Activated B cell treated with CpG ODN at 0.5 μM for 24 hours (primary cell): ENCODE measurements at regions of chrX and their contacts with region 1.

Region 1: DNA sequence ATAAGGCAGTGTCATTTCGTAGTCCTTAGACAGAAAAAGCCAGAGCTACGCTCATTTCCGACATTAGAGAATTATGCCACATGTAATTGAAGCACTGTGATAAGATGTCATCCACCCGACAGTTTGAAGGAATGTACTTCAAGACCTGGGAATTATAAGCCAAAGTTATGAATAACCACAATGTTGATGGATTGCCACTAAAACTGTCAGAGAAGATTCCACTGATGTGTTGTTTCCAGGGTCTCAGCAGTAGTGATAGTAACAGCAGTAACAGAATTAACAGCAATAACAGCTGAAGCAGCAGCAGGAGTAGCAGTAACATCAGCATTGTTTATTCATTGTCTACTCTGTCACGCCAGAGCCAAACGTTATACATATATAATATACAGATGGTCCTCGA is 24.7 kb downstream of the RAB33A start:
- DNase-seq: no peak
- ATAC-seq: no peak
- H3K4me3 Mint-ChIP-seq: no peak overlapping the region
- H3K27ac Mint-ChIP-seq: no peak overlapping the region
- H3K4me1 Mint-ChIP-seq: peaks cover 7% of the 10 kb centered on the region
- H3K27me3 Mint-ChIP-seq: no peaks in the 10 kb centered on the region
- CTCF ChIP-seq: no peak

Region 2: GRCh38 chrX:129606918-129607317 is 589.5 kb before region 1 on chrX:
- CTCF ChIA-PET with region 1: no interaction called
- POLR2A ChIA-PET with region 1: no interaction called
- intact Hi-C with region 1: loop called (anchors 1 kb)
- DNase-seq: no peak
- ATAC-seq: peak; percentile 61
- H3K4me3 Mint-ChIP-seq: no peak overlapping the region
- H3K27ac Mint-ChIP-seq: no peak overlapping the region
- H3K4me1 Mint-ChIP-seq: peaks cover 19% of the 10 kb centered on the region
- H3K27me3 Mint-ChIP-seq: no peaks in the 10 kb centered on the region
- CTCF ChIP-seq: no peak

Region 3: GRCh38 chrX:129925305-129926092 is 271.0 kb before region 1 on chrX:
- CTCF ChIA-PET with region 1: interaction called, 7 read pairs
- POLR2A ChIA-PET with region 1: no interaction called
- intact Hi-C with region 1: loop called (anchors 10 kb)
- DNase-seq: peak; percentile 30
- ATAC-seq: peak; percentile 84
- H3K4me3 Mint-ChIP-seq: no peak overlapping the region
- H3K27ac Mint-ChIP-seq: no peak overlapping the region
- H3K4me1 Mint-ChIP-seq: peaks cover 4% of the 10 kb centered on the region
- H3K27me3 Mint-ChIP-seq: no peaks in the 10 kb centered on the region
- CTCF ChIP-seq: no peak

Region 4: DNA sequence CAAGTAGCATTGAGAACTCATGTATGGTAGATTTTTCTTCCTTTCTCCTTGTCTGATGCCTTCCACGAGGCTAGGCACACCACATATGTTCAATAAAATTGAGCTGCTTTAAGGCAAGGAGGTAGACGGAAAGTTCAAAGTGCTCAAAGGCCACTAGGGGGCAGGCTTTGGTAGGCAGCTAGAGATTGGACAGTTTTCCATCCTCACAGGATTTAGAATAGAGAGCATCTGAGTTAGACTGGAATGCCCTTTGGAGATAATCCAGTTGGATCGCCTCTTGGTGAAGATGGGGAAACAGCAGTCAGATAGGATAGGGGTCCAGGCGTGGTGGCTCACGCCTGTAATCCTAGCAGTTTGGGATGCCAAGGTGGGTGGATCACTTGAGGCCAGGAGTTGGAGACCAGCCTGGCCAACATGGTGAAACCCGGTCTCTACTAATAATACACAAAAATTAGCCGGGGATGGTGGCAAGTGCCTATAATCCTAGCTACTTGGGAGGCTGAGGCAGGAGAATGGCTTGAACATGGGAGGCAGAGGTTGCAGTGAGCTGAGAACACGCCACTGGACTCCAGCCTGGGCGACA is 116.6 kb before region 1 on chrX:
- CTCF ChIA-PET with region 1: interaction called, 80 read pairs
- POLR2A ChIA-PET with region 1: no interaction called
- intact Hi-C with region 1: loop called (anchors 1 kb)
- DNase-seq: no peak
- ATAC-seq: no peak
- H3K4me3 Mint-ChIP-seq: no peak overlapping the region
- H3K27ac Mint-ChIP-seq: peak overlapping the region; percentile 61
- H3K4me1 Mint-ChIP-seq: peaks cover 41% of the 10 kb centered on the region
- H3K27me3 Mint-ChIP-seq: no peaks in the 10 kb centered on the region
- CTCF ChIP-seq: no peak

Region 5: GRCh38 chrX:130110379-130111219 is 85.9 kb before region 1 on chrX and contains the start of gene ELF4:
- CTCF ChIA-PET with region 1: no interaction called
- POLR2A ChIA-PET with region 1: no interaction called
- intact Hi-C with region 1: no loop called
- DNase-seq: peak; percentile 44
- ATAC-seq: peak; percentile 59
- H3K4me3 Mint-ChIP-seq: peak within 1 kb of the TSS; percentile 92
- H3K27ac Mint-ChIP-seq: peak within 1 kb of the TSS; percentile 88
- H3K4me1 Mint-ChIP-seq: peaks cover 40% of the 10 kb centered on the region
- H3K27me3 Mint-ChIP-seq: no peaks in the 10 kb centered on the region
- CTCF ChIP-seq: no peak
- total RNA-seq, gene ELF4: 32.4 and 33.0 TPM in 2 replicates

Region 6: GRCh38 chrX:130120746-130121504 is 75.5 kb before region 1 on chrX:
- CTCF ChIA-PET with region 1: interaction called, 7 read pairs
- POLR2A ChIA-PET with region 1: no interaction called
- intact Hi-C with region 1: loop called (anchors 2 kb)
- DNase-seq: peak; percentile 64
- ATAC-seq: peak; percentile 83
- H3K4me3 Mint-ChIP-seq: peak overlapping the region; percentile 76
- H3K27ac Mint-ChIP-seq: peak overlapping the region; percentile 53
- H3K4me1 Mint-ChIP-seq: peaks cover 18% of the 10 kb centered on the region
- H3K27me3 Mint-ChIP-seq: no peaks in the 10 kb centered on the region
- CTCF ChIP-seq: no peak

Region 7: DNA sequence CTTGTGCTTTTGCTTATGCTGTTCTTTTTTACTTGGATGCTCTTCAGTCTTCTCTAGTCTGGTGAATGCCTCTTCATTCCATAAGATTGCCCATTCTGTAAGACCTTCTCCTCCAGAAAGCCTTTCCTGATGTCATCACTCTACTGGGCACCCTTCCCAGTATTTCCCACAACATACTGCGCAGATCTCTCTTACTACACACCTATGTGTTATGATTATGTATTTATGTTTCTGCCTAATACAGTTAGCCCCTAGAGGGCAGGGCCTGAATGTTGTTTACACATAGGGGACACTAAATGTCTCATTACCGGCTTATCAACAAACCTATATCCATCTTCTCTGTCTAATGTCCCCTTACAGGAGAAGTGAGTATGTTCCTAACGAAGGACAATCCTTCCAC is 52.0 kb before region 1 on chrX:
- CTCF ChIA-PET with region 1: interaction called, 4 read pairs
- POLR2A ChIA-PET with region 1: no interaction called
- intact Hi-C with region 1: loop called (anchors 1 kb)
- DNase-seq: no peak
- ATAC-seq: no peak
- H3K4me3 Mint-ChIP-seq: no peak overlapping the region
- H3K27ac Mint-ChIP-seq: no peak overlapping the region
- H3K4me1 Mint-ChIP-seq: peaks cover 2% of the 10 kb centered on the region
- H3K27me3 Mint-ChIP-seq: no peaks in the 10 kb centered on the region
- CTCF ChIP-seq: no peak

Region 8: GRCh38 chrX:130260316-130260715 is 63.9 kb after region 1 on chrX:
- CTCF ChIA-PET with region 1: no interaction called
- POLR2A ChIA-PET with region 1: no interaction called
- intact Hi-C with region 1: no loop called
- DNase-seq: no peak
- ATAC-seq: no peak
- H3K4me3 Mint-ChIP-seq: no peak overlapping the region
- H3K27ac Mint-ChIP-seq: no peak overlapping the region
- H3K4me1 Mint-ChIP-seq: no peaks in the 10 kb centered on the region
- H3K27me3 Mint-ChIP-seq: no peaks in the 10 kb centered on the region
- CTCF ChIP-seq: no peak